Psoas muscle (tissue), 8 donors: ENCODE measurements at regions of chr9 and their contacts with region 1.

Region 1: DNA sequence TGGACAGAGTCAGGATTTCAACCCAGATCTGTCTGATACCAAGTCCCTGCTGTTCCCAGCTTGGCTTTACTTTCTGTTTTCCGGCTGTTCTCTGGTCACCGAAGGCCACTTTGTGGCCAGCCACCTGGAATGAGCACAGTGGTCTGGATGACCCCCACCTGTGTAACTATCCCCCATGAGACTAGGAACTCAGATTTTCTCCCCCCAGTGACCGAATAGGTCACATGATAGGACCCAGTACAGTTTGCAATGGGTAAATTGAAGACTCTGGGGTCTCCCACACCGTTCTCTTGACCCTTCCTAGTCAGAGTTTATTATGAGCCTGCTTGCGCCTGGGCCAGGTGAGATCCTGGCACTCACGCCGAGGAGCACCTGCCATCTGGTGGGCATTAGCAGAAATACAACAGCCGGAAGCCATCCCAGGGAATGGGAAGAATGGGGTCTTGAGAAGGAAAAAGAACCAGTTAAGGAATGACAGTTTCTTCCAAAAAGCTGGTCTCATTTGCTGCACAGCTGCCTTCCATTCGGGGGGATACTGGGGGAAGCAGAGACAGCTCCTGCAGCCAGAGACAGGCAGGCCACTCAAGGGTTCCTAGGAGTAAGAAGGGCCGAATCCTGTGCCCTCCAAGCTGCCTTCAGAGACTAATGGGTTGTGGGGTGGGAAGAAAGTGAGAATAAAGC is 7.1 kb downstream of the PHYHD1 start:
- DNase-seq: peak; percentile 46 to 72
- ATAC-seq: peak; percentile 85 to 93 (median 92)
- H3K4me3 ChIP-seq: no peak overlapping the region
- H3K27ac ChIP-seq: no peak overlapping the region
- H3K4me1 ChIP-seq: peaks cover 4% of the 10 kb centered on the region
- H3K27me3 ChIP-seq: no peaks in the 10 kb centered on the region
- CTCF ChIP-seq: peak; percentile 87

Region 2: DNA sequence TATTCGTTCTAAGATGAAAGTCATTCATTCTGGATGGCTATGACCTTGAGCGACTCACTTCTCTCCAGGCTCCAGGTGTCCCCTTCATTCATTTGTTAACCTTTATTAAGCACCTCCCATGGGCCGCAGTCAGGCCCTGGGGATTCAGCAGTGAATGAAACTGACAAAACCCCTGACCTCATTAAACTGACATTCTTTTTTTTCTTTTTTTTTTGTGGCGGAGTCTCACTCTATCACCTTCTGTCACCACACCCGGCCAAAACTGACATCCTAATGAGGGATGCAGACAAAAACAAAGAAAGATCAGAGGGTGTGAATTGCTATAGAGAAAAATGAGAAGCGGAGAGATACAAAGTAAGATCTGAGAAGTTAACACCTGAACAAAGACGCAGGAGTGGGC is 488.6 kb before region 1 on chr9:
- intact Hi-C with region 1: no loop called
- DNase-seq: no peak
- ATAC-seq: no peak
- H3K4me3 ChIP-seq: no peak overlapping the region
- H3K27ac ChIP-seq: no peak overlapping the region
- H3K4me1 ChIP-seq: no peaks in the 10 kb centered on the region
- H3K27me3 ChIP-seq: no peaks in the 10 kb centered on the region
- CTCF ChIP-seq: no peak

Region 3: GRCh38 chr9:128847803-128848202 is 80.1 kb before region 1 on chr9:
- intact Hi-C with region 1: loop called in 1 of 2 experiments (anchors 1 kb)
- DNase-seq: peak in 1 of 2 donors; percentile 2
- ATAC-seq: no peak
- H3K4me3 ChIP-seq: no peak overlapping the region
- H3K27ac ChIP-seq: no peak overlapping the region
- H3K4me1 ChIP-seq: no peaks in the 10 kb centered on the region
- H3K27me3 ChIP-seq: no peaks in the 10 kb centered on the region
- CTCF ChIP-seq: no peak

Region 4: GRCh38 chr9:128863647-128864046 is 64.2 kb before region 1 on chr9:
- intact Hi-C with region 1: loop called (anchors 1 to 5 kb)
- DNase-seq: peak; percentile 73 to 86
- ATAC-seq: peak; percentile 62 to 74 (median 70)
- H3K4me3 ChIP-seq: no peak overlapping the region
- H3K27ac ChIP-seq: no peak overlapping the region
- H3K4me1 ChIP-seq: peaks cover 25% of the 10 kb centered on the region
- H3K27me3 ChIP-seq: no peaks in the 10 kb centered on the region
- CTCF ChIP-seq: peak; percentile 88